Heart right ventricle (tissue), 16 donors: ENCODE measurements at regions of chr12 and their contacts with region 1.

Region 1: DNA sequence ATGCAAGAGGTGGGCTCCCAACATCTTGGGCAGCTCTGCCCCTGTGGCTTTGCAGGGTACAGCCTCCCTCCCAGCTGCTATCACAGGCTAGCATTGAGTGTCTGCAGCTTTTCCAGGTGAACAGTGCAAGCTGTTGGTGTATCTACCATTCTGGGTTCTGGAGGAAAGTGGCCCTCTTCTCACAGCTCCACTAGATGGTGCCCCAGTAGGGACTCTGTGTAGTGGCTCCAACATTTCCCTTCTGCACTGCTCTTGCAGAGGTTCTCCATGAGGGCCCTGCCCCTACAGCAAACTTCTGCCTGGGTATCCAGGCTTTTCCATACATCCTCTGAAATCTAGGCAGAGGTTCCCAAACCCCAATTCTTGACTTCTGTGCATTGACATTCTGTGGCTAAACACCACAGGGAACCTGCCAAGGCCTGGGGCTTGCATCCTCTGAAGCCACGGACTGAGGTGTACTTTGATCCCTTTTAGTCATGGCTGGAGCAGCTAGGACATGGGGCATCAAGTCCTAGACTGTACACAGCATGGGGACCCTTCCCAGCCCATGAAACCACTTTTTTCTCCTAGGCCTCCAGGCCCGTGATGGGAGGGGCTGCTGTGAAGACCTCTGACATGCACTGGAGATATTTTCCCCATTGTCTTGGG is 24.0 kb upstream of the SLC38A1 start:
- DNase-seq: no peak
- ATAC-seq: no peak
- H3K4me3 ChIP-seq: no peak overlapping the region
- H3K27ac ChIP-seq: no peak overlapping the region
- H3K4me1 ChIP-seq: no peaks in the 10 kb centered on the region
- H3K27me3 ChIP-seq: no peaks in the 10 kb centered on the region
- CTCF ChIP-seq: peak in 6 of 9 donors; percentile 8 to 23 (median 18)

Region 2: GRCh38 chr12:46131729-46132469 is 161.0 kb before region 1 on chr12:
- intact Hi-C with region 1: loop called in 1 of 10 experiments (anchors 10 kb)
- DNase-seq: no peak
- ATAC-seq: peak in 2 of 8 donors; percentile 37 to 39
- H3K4me3 ChIP-seq: no peak overlapping the region
- H3K27ac ChIP-seq: no peak overlapping the region
- H3K4me1 ChIP-seq: peaks cover 0 to 8% (median 0%) of the 10 kb centered on the region in 9 donors
- H3K27me3 ChIP-seq: no peaks in the 10 kb centered on the region
- CTCF ChIP-seq: peak in 4 of 9 donors; percentile 12 to 22 (median 20)

Region 3: GRCh38 chr12:46153268-46153872 is 139.5 kb before region 1 on chr12:
- intact Hi-C with region 1: loop called in 2 of 10 experiments (anchors 10 kb)
- DNase-seq: no peak
- ATAC-seq: no peak
- H3K4me3 ChIP-seq: no peak overlapping the region
- H3K27ac ChIP-seq: no peak overlapping the region
- H3K4me1 ChIP-seq: peaks cover 0 to 12% (median 0%) of the 10 kb centered on the region in 9 donors
- H3K27me3 ChIP-seq: no peaks in the 10 kb centered on the region
- CTCF ChIP-seq: peak; percentile 10 to 71 (median 61)

Region 4: DNA sequence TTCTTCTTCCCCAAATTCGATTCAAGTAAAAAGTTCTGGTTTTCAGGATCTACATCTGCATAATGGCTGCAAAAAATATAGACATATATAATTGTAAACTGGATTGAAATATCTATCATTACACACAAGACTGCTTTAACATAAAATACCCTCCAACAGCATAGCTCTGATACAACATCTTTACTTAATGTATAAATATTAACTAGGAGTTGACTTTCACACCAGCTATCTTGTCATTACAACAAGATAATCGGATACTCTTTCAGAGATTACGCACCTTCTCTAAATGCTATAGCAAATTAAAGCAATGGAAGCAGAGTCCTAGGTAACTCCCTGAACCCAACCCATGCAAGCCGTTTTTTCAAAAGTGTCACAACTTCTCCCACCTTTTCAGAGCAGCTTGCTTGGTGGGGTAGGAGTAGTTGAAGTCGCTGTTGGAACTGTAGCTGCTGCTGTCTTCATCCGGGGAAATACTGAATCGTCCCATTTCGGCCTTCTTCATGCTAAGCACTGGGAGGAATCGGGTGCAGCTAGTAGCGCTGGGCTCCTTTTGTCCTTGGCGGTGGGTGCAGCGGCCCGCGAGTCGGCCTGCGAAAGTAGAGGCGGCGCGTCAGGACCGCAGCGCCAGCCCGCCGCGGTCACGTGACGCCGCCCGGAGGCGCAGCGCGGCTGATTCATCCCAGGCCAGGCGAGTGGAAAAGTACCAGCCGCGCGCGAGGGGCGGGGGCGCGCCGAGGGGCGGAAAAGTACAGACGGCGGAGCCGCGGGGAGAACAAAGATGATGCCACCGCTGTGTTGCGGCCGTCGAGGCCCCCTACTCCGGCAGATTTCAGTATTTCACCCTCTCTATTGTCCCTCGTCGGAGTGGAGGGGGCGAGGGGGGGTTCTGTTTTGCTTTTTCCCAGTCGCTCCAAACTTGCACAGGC is 78.2 kb after region 1 on chr12:
- intact Hi-C with region 1: no loop called
- DNase-seq: peak; percentile 92 to 93
- ATAC-seq: peak; percentile 74 to 90 (median 86)
- H3K4me3 ChIP-seq: peak overlapping the region; percentile 73 to 98 (median 89)
- H3K27ac ChIP-seq: peak overlapping the region; percentile 94 to 99 (median 98)
- H3K4me1 ChIP-seq: peaks cover 16 to 61% (median 53%) of the 10 kb centered on the region in 9 donors
- H3K27me3 ChIP-seq: no peaks in the 10 kb centered on the region
- CTCF ChIP-seq: peak in 4 of 9 donors; percentile 9 to 47 (median 26)